Panc1 (cell line): ENCODE measurements at regions of chr10 and their contacts with region 1.

Region 1: DNA sequence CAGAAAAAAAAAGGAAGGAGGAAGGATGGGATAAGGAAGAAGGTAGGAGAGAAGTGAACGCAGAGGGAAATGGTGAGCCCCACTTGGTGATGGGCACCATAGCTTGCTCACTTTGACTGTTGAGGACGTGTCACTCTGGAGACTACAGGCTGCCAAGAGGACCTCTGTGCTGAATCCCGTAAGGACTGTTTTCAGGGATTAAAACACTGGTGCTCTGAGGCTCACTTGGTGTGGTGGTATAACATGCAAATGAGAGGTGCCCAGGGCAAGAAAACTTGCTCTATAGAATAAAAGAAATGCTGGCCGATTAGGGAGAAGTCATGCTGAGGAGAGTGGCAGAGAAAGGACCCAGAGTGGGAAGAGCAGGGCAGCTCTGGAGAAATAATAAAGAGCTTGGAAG is 5.3 kb upstream of the IL2RA start:
- DNase-seq: no peak
- ATAC-seq: no peak
- H3K4me3 ChIP-seq: no peak overlapping the region
- H3K27ac ChIP-seq: no peak overlapping the region
- H3K4me1 ChIP-seq: no peaks in the 10 kb centered on the region
- H3K27me3 ChIP-seq: no peaks in the 10 kb centered on the region; the same call in 1 of the 2 replicates
- CTCF ChIP-seq: no peak

Region 2: GRCh38 chr10:5809527-5810154 is 257.8 kb before region 1 on chr10:
- CTCF ChIA-PET with region 1: no interaction called
- POLR2A ChIA-PET with region 1: no interaction called
- in situ Hi-C with region 1: no loop called
- intact Hi-C with region 1: no loop called
- DNase-seq: no peak
- ATAC-seq: no peak
- H3K4me3 ChIP-seq: no peak overlapping the region; a peak in 1 of 4 replicates
- H3K27ac ChIP-seq: peak overlapping the region; percentile 54; the same call in 1 of the 2 replicates
- H3K4me1 ChIP-seq: peaks cover 17% of the 10 kb centered on the region; the same call in 1 of the 2 replicates
- H3K27me3 ChIP-seq: no peaks in the 10 kb centered on the region
- CTCF ChIP-seq: no peak

Region 3: DNA sequence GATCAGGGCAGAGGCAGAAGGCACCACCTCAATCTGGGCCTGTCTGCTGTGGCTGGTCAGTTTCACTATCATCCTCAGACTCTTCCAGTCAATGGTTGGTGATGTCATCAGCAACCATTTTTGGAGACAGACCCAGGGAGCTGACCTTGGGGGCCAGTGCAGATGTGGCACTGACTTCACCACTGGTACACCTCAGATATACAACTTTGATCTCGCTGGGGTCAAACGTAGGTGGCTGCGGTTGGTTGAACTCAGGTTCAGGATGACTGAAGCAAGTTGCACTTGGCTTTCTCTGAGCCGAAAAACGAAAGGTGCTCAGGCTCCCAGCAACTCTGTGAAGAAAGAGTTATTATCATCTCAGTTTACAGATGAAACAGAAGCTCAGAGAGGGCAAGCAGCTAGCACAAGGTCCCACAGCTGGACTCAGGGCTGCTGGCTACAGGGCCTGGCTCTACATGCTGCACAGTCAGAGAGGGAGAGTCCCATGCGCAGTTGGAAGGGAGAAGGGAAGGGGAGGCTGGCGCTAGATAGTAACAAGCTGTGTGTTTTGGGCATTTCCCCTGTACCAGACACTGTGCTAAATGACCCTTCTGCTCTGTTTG is 205.0 kb before region 1 on chr10:
- CTCF ChIA-PET with region 1: no interaction called
- POLR2A ChIA-PET with region 1: no interaction called
- in situ Hi-C with region 1: no loop called
- intact Hi-C with region 1: no loop called
- DNase-seq: no peak
- ATAC-seq: no peak
- H3K4me3 ChIP-seq: no peak overlapping the region
- H3K27ac ChIP-seq: no peak overlapping the region
- H3K4me1 ChIP-seq: no peaks in the 10 kb centered on the region; the same call in none of the 2 replicates
- H3K27me3 ChIP-seq: no peaks in the 10 kb centered on the region
- CTCF ChIP-seq: no peak

Region 4: DNA sequence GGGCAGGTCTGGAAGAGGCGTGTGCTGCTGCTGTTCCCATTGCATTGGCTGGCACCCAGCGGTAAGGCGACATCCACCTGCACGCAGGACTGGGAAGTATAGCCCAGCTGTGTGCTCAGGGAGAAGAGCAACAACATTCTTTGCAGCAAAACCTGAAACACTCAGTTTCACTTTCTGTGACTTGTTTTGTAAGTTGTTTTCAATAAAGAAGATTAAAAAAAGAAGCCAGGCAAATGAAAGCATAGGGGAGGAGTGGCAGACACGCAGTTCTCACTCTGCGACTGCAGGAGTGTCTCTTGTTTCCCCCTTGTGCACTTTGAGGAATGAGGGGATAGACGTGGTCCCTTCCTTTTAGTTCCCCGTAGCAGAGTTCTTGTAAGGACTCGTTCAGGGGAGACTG is 171.7 kb before region 1 on chr10:
- CTCF ChIA-PET with region 1: no interaction called
- POLR2A ChIA-PET with region 1: no interaction called
- in situ Hi-C with region 1: no loop called
- intact Hi-C with region 1: no loop called
- DNase-seq: no peak
- ATAC-seq: no peak
- H3K4me3 ChIP-seq: no peak overlapping the region
- H3K27ac ChIP-seq: no peak overlapping the region
- H3K4me1 ChIP-seq: 0 out of 2 replicates have a peak, but pooled peaks cover 3% of the 10 kb centered on the region
- H3K27me3 ChIP-seq: no peaks in the 10 kb centered on the region
- CTCF ChIP-seq: no peak

Region 5: GRCh38 chr10:5910323-5911100 is 156.9 kb before region 1 on chr10:
- CTCF ChIA-PET with region 1: no interaction called
- POLR2A ChIA-PET with region 1: interaction called, 10 read pairs
- in situ Hi-C with region 1: no loop called
- intact Hi-C with region 1: no loop called
- DNase-seq: no peak
- ATAC-seq: no peak
- H3K4me3 ChIP-seq: no peak overlapping the region
- H3K27ac ChIP-seq: no peak overlapping the region
- H3K4me1 ChIP-seq: no peaks in the 10 kb centered on the region
- H3K27me3 ChIP-seq: no peaks in the 10 kb centered on the region
- CTCF ChIP-seq: no peak

Region 6: GRCh38 chr10:6050801-6051445 is 16.5 kb before region 1 on chr10:
- CTCF ChIA-PET with region 1: no interaction called
- POLR2A ChIA-PET with region 1: no interaction called
- in situ Hi-C with region 1: no loop called
- intact Hi-C with region 1: no loop called
- DNase-seq: peak; percentile 4
- ATAC-seq: peak; percentile 85
- H3K4me3 ChIP-seq: peak overlapping the region; percentile 27 to 50
- H3K27ac ChIP-seq: no peak overlapping the region
- H3K4me1 ChIP-seq: peaks cover 3% of the 10 kb centered on the region; the same call in 1 of the 2 replicates
- H3K27me3 ChIP-seq: no peaks in the 10 kb centered on the region
- CTCF ChIP-seq: peak; percentile 56